ENCODE measurements at regions of chr19 and their contacts with region 1.

Region 1: DNA sequence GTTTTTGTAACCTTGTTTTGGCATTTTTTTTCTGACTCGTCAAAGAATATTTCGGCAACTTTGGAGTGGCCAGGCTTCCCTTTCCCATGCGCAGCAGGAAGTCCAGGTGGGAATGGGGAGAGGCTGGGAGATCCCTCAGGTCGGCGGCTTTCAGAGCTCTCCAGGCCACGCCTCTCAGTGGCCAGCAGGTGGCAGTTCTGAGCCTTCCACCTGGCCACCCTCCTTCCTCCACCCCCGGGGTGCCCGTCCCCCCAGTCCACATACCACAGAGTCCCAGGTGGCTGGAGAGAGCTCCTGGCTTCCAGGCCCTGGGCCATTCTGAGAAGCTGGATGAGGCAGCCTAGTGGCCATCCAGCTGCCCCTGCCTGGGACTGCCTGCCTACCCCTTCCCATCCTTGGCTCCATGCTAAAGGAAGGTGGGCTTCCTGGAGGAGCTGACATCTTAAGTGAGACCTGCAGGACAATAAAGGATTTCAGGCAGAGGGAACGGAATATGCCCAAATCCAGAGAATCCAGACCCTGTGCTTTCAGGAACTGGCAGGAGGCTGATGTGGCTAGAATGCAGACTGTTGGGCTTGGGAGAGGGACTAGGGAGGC is 46.3 kb downstream of the CCNE1 start:
- DNase-seq: no peak
- H3K4me3 ChIP-seq: no peak overlapping the region
- H3K27ac ChIP-seq: no peak overlapping the region
- H3K4me1 ChIP-seq: no peaks in the 10 kb centered on the region
- H3K27me3 ChIP-seq: no peaks in the 10 kb centered on the region
- CTCF ChIP-seq: peak; percentile 23 to 60
- POLR2A ChIP-seq: no peak

Region 2: GRCh38 chr19:29836409-29836825 is 21.7 kb before region 1 on chr19:
- CTCF ChIA-PET with region 1: no interaction called
- POLR2A ChIA-PET with region 1: no interaction called
- dilution Hi-C with region 1: no loop called
- intact Hi-C with region 1: no loop called
- DNase-seq: no peak
- H3K4me3 ChIP-seq: no peak overlapping the region
- H3K27ac ChIP-seq: no peak overlapping the region
- H3K4me1 ChIP-seq: no peaks in the 10 kb centered on the region
- H3K27me3 ChIP-seq: no peaks in the 10 kb centered on the region
- CTCF ChIP-seq: no peak
- POLR2A ChIP-seq: no peak

Region 3: GRCh38 chr19:29887442-29887855 is 29.4 kb after region 1 on chr19:
- CTCF ChIA-PET with region 1: no interaction called
- POLR2A ChIA-PET with region 1: no interaction called
- dilution Hi-C with region 1: no loop called
- intact Hi-C with region 1: loop called (anchors 1 kb)
- DNase-seq: peak; percentile 33
- H3K4me3 ChIP-seq: no peak overlapping the region
- H3K27ac ChIP-seq: no peak overlapping the region
- H3K4me1 ChIP-seq: peaks cover 4% of the 10 kb centered on the region
- H3K27me3 ChIP-seq: no peaks in the 10 kb centered on the region
- CTCF ChIP-seq: no peak
- POLR2A ChIP-seq: no peak